ENCODE measurements at regions of chr16 and their contacts with region 1.

Region 1: GRCh38 chr16:10181196-10182162 is 749 bp downstream of the GRIN2A start:
- DNase-seq: peak; percentile 33 to 74
- H3K4me3 ChIP-seq: peak overlapping the region; percentile 21 to 42
- H3K27ac ChIP-seq: no peak overlapping the region
- H3K4me1 ChIP-seq: peaks cover 0 to 32% (median 28%) of the 10 kb centered on the region in 4 donors
- H3K27me3 ChIP-seq: peaks cover 0 to 39% of the 10 kb centered on the region in 2 donors
- CTCF ChIP-seq: peak; percentile 94 to 95

Region 2: GRCh38 chr16:9258423-9259051 is 922.9 kb before region 1 on chr16:
- intact Hi-C with region 1: loop called (anchors 5 kb)
- DNase-seq: no peak
- H3K4me3 ChIP-seq: no peak overlapping the region
- H3K27ac ChIP-seq: no peak overlapping the region
- H3K4me1 ChIP-seq: peaks cover 0 to 31% (median 3%) of the 10 kb centered on the region in 4 donors
- H3K27me3 ChIP-seq: peaks cover 0 to 12% of the 10 kb centered on the region in 2 donors
- CTCF ChIP-seq: peak; percentile 53 to 62

Region 3: DNA sequence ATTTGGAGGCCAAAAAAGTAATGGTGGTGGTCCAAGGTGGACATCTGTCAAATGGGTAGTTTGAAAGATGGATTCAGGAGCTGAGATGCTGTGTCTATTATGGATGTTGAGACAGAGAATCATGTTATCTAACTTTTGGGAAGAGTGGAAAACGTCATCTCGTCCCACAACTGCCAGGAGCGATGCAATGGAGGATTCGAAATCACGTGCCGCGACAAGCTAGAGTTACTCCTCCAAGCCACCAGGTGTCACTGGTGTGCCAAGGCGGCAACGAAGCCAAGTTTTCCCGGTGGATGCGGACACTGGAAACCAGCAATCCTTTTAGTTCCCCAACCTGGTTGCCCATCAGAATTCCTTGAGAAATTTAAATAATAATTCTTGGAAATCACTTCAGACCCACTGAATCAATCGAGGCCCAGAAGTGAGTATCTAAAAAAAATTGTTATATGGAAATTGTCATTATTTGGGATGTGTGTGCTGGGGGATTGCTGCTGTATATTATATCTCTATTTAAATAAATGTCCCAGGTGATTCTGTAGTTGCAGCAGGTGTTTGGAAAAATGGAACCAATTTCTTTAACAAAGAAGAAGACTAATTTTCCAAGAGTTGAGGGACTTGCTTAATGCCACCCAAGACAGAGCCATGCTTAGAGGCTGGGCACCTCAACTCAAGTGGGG is 883.9 kb before region 1 on chr16:
- intact Hi-C with region 1: loop called (anchors 5 kb)
- DNase-seq: peak; percentile 23 to 72
- H3K4me3 ChIP-seq: no peak overlapping the region
- H3K27ac ChIP-seq: no peak overlapping the region
- H3K4me1 ChIP-seq: peaks cover 0 to 18% (median 0%) of the 10 kb centered on the region in 4 donors
- H3K27me3 ChIP-seq: no peaks in the 10 kb centered on the region
- CTCF ChIP-seq: peak; percentile 73 to 76

Region 4: GRCh38 chr16:9946022-9946720 is 235.3 kb before region 1 on chr16:
- intact Hi-C with region 1: no loop called
- DNase-seq: no peak
- H3K4me3 ChIP-seq: no peak overlapping the region
- H3K27ac ChIP-seq: no peak overlapping the region
- H3K4me1 ChIP-seq: no peaks in the 10 kb centered on the region
- H3K27me3 ChIP-seq: no peaks in the 10 kb centered on the region
- CTCF ChIP-seq: no peak

Region 5: DNA sequence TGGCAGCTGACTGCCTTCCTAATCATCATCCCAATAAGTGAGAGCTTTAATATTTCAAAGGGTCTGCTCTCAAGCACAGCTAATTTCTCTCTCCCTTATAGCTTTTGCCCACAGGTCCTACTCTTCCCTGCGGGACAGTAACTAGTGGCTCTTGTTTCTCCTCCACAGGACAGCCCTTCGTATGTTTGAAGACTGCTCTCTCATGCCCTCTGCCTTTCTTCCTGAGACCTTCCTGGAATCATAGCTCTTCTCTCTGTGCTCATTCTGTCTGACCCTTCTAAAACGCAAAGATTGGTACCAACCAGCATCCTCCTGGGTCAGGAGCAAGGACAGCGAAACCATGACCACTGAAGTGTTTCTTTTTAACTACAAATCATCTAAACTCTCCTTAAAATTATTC is 168.1 kb before region 1 on chr16:
- intact Hi-C with region 1: no loop called
- DNase-seq: no peak
- H3K4me3 ChIP-seq: no peak overlapping the region
- H3K27ac ChIP-seq: no peak overlapping the region
- H3K4me1 ChIP-seq: no peaks in the 10 kb centered on the region
- H3K27me3 ChIP-seq: no peaks in the 10 kb centered on the region
- CTCF ChIP-seq: no peak

Region 6: DNA sequence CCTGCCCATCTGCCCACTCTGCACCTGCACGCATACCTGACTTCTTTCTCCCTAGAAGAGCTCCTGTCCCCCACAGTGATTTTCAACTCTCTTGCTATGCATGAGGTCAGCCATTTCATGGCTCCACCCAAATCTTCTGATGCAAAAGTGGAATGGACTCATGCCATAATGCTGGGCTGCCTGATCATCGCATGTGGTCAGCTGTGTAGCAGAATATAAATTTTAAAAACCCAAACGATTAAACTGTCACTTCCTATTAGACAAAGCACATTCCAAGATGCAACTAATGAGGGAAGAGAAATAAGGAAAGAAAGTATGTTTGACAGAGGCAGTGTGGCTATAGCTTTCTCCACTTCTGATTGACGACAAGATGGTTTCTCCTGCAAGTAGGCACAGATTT is 25.4 kb before region 1 on chr16:
- intact Hi-C with region 1: no loop called
- DNase-seq: no peak
- H3K4me3 ChIP-seq: no peak overlapping the region
- H3K27ac ChIP-seq: no peak overlapping the region
- H3K4me1 ChIP-seq: peaks cover 0 to 21% (median 4%) of the 10 kb centered on the region in 4 donors
- H3K27me3 ChIP-seq: no peaks in the 10 kb centered on the region
- CTCF ChIP-seq: no peak

Region 7: GRCh38 chr16:10228546-10229178 is 47.2 kb after region 1 on chr16:
- intact Hi-C with region 1: no loop called
- DNase-seq: no peak
- H3K4me3 ChIP-seq: no peak overlapping the region
- H3K27ac ChIP-seq: no peak overlapping the region
- H3K4me1 ChIP-seq: no peaks in the 10 kb centered on the region
- H3K27me3 ChIP-seq: peaks cover 0 to 25% of the 10 kb centered on the region in 2 donors
- CTCF ChIP-seq: no peak